Ascending aorta (tissue), 2 donors: ENCODE measurements at regions of chr6 and their contacts with region 1.

Region 1: GRCh38 chr6:30678964-30679726 is 6.3 kb upstream of the DHX16 start:
- DNase-seq: peak; percentile 38 to 93
- H3K4me3 ChIP-seq: peak overlapping the region; percentile 32 to 91
- H3K27ac ChIP-seq: peak overlapping the region; percentile 99
- H3K4me1 ChIP-seq: peaks cover 11 to 35% of the 10 kb centered on the region in 2 donors
- H3K27me3 ChIP-seq: no peaks in the 10 kb centered on the region
- CTCF ChIP-seq: peak; percentile 94 to 98 (median 97)

Region 2: DNA sequence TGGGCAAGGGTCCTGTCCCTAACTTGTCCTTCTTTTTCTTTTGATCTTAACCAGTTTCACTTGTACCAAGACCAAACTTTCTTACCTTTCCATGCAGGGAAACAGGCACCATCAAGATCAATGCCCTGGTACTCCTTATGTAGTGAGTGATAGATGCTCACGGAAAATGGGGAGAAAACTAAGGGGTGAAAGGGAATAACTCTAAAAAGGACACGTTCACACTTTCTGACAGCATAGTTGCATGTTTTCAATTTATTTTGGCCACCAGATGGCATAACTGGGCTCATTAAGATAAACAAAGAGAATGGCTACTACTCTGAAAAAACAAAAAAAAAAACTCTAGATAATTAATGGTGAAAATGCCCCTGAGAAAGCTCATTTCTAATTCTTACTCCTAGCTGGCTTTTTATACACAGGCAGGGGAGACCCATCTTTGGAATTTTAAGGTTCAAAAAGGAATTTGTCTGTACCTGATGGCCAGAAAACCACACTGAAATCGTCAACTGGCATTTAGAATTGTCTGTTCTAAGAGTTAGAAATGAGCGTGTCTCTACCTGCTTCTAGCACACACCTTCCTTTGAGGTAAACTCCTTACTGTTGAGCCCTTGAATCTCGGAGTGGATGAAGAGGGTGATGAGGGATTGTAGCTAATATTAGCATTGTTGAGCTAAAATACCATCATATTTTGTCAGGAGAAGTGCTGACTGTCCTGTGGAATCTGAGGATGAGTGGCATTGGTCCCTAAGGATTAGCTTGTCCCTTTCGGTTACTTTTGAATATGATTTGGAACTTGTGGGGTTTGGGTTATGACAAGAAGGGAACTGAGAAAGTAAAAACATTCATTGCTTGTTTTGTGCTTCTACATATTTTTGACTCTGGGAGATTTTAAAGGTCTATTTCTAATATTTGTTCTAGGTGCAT is 143.0 kb after region 1 on chr6:
- intact Hi-C with region 1: loop called (anchors 5 kb)
- DNase-seq: no peak
- H3K4me3 ChIP-seq: no peak overlapping the region
- H3K27ac ChIP-seq: peak overlapping the region; percentile 35 to 47
- H3K4me1 ChIP-seq: peaks cover 6 to 14% of the 10 kb centered on the region in 2 donors
- H3K27me3 ChIP-seq: no peaks in the 10 kb centered on the region
- CTCF ChIP-seq: peak; percentile 31 to 45 (median 45)

Region 3: GRCh38 chr6:30877419-30878371 is 198.6 kb after region 1 on chr6:
- intact Hi-C with region 1: loop called (anchors 2 kb)
- DNase-seq: peak; percentile 67 to 97
- H3K4me3 ChIP-seq: peak overlapping the region; percentile 45 to 57
- H3K27ac ChIP-seq: peak overlapping the region; percentile 81 to 87
- H3K4me1 ChIP-seq: peaks cover 0 to 11% of the 10 kb centered on the region in 2 donors
- H3K27me3 ChIP-seq: no peaks in the 10 kb centered on the region
- CTCF ChIP-seq: peak; percentile 86 to 90 (median 89)